Activated CD4-positive, alpha-beta memory T cell treated with anti-CD3 and anti-CD28 coated beads for 36 hours (primary cell): ENCODE measurements at regions of chr20 and their contacts with region 1.

Region 1: DNA sequence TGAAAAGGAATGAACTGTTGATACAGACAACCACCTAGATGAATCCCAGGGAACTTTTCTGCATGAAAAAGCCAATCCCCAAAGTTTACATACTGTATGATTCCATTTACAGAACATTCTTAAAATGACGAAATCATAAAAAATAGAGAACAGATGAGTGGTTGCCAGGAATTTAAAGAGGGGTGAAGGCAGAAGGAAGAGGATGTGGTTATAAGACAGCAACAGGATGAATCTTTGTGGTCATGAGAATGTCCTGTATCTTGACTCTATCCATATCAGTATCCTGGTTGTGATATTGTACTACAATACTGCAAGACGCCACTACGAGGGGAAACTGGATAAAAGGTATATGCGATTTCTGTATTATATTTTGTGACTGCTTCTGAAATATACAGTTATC is 70.1 kb upstream of the EMILIN3 start:
- DNase-seq: no peak
- H3K4me3 Mint-ChIP-seq: no peak overlapping the region
- H3K27ac Mint-ChIP-seq: no peak overlapping the region
- H3K4me1 Mint-ChIP-seq: peaks cover 40% of the 10 kb centered on the region
- H3K27me3 Mint-ChIP-seq: no peaks in the 10 kb centered on the region

Region 2: DNA sequence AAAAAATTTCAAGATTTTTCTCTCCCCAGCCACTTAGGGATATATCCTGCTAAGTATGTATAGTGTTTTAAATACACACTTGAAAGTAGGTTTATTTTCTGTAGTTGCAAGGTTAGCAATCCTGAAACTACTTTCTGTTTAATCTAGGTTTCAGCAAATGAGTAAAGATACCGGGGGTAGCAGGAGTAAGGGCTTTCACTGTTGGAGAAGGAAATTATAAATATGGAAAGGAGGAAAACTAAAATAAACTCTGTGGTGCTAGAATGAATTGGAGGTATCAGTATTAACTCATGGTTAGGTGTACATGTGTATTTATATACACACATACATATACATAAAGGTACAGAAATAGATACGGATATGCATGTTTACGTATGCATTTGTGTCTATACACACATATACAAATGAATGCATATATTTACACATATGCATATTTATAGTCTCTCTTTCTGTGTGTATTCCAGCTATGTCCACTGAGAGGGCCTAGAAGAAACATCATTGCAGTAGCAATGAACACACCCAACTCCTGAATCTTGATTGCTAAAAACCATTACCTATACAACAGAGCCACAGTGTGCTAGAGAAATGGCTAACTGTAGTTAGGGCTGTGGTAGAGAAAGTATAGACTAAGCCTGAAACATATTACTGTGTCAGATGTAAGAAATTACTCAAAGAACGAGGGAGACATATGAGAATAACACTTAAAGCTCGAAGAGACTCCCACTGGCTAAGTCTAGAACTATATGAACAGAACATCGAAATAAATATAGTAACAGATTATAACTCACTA is 25.9 kb after region 1 on chr20:
- CTCF ChIA-PET with region 1: no interaction called
- POLR2A ChIA-PET with region 1: no interaction called
- intact Hi-C with region 1: loop called (anchors 1 kb)
- DNase-seq: no peak
- H3K4me3 Mint-ChIP-seq: no peak overlapping the region
- H3K27ac Mint-ChIP-seq: no peak overlapping the region
- H3K4me1 Mint-ChIP-seq: peaks cover 13% of the 10 kb centered on the region
- H3K27me3 Mint-ChIP-seq: no peaks in the 10 kb centered on the region

Region 3: DNA sequence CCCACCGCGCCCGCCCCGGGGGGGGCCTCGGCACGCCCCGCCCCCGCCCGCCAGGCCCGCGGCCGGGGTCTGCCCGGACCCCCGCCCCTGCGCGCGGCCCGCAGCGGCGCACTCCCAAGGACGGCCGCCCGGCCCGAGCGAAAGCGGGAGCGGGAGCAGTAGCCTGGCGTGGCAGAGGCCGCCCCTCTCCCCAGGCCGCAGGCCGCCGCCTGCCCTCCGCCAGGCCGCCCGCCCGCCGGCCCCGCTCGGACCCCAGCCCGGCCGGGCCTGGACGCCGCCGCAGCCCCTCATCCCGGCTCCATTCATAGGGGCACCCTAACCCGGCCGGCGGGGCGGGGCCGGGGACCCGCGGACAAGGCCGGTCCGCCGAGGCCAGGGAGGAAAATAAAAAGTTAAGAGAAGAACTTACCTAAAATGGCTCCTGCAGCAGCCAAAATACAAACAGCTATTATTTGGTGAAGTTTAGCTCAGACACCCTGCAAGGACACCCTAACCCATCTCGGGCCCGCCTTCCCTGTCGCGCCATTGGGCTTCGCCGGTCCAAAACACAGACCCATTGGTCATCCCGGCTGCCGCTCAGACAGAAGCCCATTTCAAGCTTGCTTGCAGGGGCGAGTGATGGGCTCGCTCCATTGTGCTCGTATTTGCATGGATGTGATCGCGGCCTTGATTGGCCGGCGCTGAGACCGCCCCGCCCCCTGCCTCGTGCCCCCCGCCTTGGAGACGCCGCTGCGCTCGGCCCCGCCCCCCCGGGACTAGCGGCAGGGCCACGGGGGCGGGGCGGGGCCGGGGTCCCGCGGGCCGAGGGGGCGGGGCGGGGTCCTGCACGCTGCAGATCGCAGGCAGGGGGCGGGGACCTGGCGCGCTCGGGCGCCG is 181.5 kb after region 1 on chr20 and contains the start of gene CHD6:
- CTCF ChIA-PET with region 1: no interaction called
- POLR2A ChIA-PET with region 1: no interaction called
- intact Hi-C with region 1: loop called (anchors 2 kb)
- DNase-seq: peak; percentile 100
- H3K4me3 Mint-ChIP-seq: peak within 1 kb of the TSS; percentile 88
- H3K27ac Mint-ChIP-seq: peak within 1 kb of the TSS; percentile 75
- H3K4me1 Mint-ChIP-seq: peaks cover 34% of the 10 kb centered on the region
- H3K27me3 Mint-ChIP-seq: no peaks in the 10 kb centered on the region
- total RNA-seq, gene CHD6: 25.2 to 29.6 TPM